GM12878 (cell line): ENCODE measurements at regions of chr1 and their contacts with region 1.

Region 1: DNA sequence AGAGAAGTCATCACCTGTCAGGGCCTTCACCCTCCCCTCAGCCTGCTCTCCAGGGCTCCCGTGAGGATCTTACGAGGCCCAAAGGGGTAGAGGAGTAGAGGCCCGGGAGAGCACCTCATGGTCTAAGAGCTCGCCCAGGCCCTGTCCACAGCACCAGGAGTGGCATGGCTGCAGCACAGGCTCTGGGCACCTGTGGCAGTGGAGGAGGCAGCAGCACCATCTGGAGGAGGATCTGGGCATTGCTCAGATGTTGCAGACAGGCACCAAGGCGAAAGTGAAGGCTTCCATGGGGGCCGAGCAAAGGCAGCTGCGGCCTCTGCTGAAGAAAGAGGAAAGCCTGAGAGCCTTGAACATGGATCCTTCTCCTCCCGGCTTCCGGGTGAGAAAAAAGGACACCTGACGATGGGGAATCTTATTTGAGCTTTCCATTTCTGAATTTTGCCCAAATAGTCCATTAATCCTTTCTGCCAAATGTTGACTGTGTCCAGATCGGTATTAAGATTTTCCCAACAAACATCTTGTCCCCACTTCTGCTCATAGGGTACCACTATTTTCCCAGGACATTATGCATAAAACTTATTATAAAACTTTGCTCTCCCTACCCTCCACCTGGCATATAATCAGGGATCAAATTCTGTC is 604.7 kb downstream of the PTPRC start:
- DNase-seq: peak; percentile 67
- ATAC-seq: peak; percentile 100
- H3K4me3 ChIP-seq: no peak overlapping the region
- H3K27ac ChIP-seq: no peak overlapping the region
- H3K4me1 ChIP-seq: peaks cover 11% of the 10 kb centered on the region
- H3K27me3 ChIP-seq: no peaks in the 10 kb centered on the region
- CTCF ChIP-seq: peak; percentile 91 to 94 (median 93)
- EP300 ChIP-seq: no peak
- POLR2A ChIP-seq: no peak
- RAD21 ChIP-seq: peak; percentile 96

Region 2: GRCh38 chr1:198771563-198772153 is 471.9 kb before region 1 on chr1:
- CTCF ChIA-PET with region 1: interaction called, 27 read pairs
- POLR2A ChIA-PET with region 1: no interaction called
- RAD21 ChIA-PET with region 1: interaction called, 25 read pairs
- SMC1A ChIA-PET with region 1: interaction called, 22 read pairs
- in situ Hi-C with region 1: loop called (anchors 10 kb)
- intact Hi-C with region 1: loop called (anchors 1 kb)
- DNase-seq: peak; percentile 20
- ATAC-seq: peak; percentile 70
- H3K4me3 ChIP-seq: no peak overlapping the region
- H3K27ac ChIP-seq: no peak overlapping the region
- H3K4me1 ChIP-seq: no peaks in the 10 kb centered on the region
- H3K27me3 ChIP-seq: no peaks in the 10 kb centered on the region
- CTCF ChIP-seq: peak; percentile 35 to 61 (median 41); a peak in 5 of 6 replicates
- EP300 ChIP-seq: no peak
- POLR2A ChIP-seq: no peak
- RAD21 ChIP-seq: peak; percentile 98

Region 3: DNA sequence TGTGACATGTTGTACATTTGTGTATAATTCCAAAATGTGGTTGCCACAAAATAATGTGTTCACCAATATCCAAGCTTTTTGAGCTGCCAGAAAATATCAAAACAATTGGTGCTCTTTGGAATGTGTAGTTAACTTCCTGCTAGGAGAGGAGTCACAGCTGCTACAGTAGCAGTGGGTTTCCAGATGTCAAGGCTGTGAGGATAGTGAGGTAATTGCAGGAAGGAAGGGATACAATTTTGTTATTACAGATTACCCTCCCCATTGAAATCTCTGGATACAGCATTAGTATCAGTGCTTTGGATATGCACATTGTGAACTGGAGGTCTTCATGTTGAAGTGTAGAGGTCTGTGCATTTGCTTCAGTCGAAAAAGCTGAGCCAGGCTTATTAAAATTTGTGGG is 351.5 kb before region 1 on chr1:
- CTCF ChIA-PET with region 1: interaction called, 40 read pairs
- POLR2A ChIA-PET with region 1: no interaction called
- RAD21 ChIA-PET with region 1: interaction called, 23 read pairs
- SMC1A ChIA-PET with region 1: interaction called, 10 read pairs
- in situ Hi-C with region 1: no loop called
- intact Hi-C with region 1: loop called (anchors 10 kb)
- DNase-seq: no peak
- ATAC-seq: no peak
- H3K4me3 ChIP-seq: no peak overlapping the region
- H3K27ac ChIP-seq: no peak overlapping the region
- H3K4me1 ChIP-seq: no peaks in the 10 kb centered on the region
- H3K27me3 ChIP-seq: no peaks in the 10 kb centered on the region
- CTCF ChIP-seq: no peak
- EP300 ChIP-seq: no peak
- POLR2A ChIP-seq: no peak
- RAD21 ChIP-seq: no peak

Region 4: DNA sequence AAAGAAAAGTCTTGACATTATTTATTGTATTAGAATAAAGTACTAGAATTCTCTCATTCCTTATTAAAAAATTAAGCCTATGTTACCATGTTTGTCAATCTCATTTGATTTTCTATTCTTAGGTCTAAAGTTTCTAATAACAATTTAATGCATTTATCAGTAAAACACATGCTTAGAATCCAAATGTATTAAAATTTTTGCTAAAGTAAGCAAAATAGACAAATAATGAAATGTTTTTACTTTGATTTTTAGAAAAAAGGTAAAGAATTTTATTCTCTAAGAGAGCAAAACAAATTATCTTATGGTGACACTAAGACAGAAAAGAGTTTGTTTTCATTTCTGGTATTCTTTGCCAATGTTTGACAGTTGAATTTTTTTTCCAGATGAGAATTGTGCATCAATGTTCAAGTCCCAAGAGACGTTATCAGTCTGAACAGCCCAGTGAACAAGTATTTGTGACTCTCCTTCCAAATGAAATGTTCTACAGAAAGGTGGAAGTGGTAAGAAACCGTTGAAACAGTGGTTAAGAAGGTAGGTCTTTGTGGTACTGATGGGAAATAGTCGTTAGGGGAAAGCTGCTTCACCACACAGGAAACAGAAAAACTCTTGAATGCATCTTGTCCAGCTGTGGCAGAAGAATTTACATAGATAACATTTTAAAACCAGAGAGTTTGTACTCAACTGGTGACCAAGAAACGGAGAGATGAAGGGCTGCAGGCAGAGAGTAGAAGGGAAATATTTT is 202.2 kb before region 1 on chr1:
- CTCF ChIA-PET with region 1: interaction called, 4 read pairs
- POLR2A ChIA-PET with region 1: no interaction called
- RAD21 ChIA-PET with region 1: interaction called, 4 read pairs
- SMC1A ChIA-PET with region 1: interaction called, 10 read pairs
- in situ Hi-C with region 1: no loop called
- intact Hi-C with region 1: loop called (anchors 2 kb)
- DNase-seq: peak; percentile 94
- ATAC-seq: peak; percentile 96
- H3K4me3 ChIP-seq: no peak overlapping the region
- H3K27ac ChIP-seq: no peak overlapping the region
- H3K4me1 ChIP-seq: peaks cover 5% of the 10 kb centered on the region; the same call in 1 of the 2 replicates
- H3K27me3 ChIP-seq: no peaks in the 10 kb centered on the region
- CTCF ChIP-seq: no peak
- EP300 ChIP-seq: peak; percentile 85 to 93
- POLR2A ChIP-seq: no peak
- RAD21 ChIP-seq: no peak

Region 5: GRCh38 chr1:199132006-199132405 is 111.5 kb before region 1 on chr1:
- CTCF ChIA-PET with region 1: interaction called, 3 read pairs
- POLR2A ChIA-PET with region 1: no interaction called
- RAD21 ChIA-PET with region 1: interaction called, 3 read pairs
- SMC1A ChIA-PET with region 1: interaction called, 4 read pairs
- in situ Hi-C with region 1: no loop called
- intact Hi-C with region 1: loop called (anchors 5 kb)
- DNase-seq: no peak
- ATAC-seq: no peak
- H3K4me3 ChIP-seq: no peak overlapping the region
- H3K27ac ChIP-seq: no peak overlapping the region
- H3K4me1 ChIP-seq: no peaks in the 10 kb centered on the region
- H3K27me3 ChIP-seq: no peaks in the 10 kb centered on the region
- CTCF ChIP-seq: no peak
- EP300 ChIP-seq: no peak
- POLR2A ChIP-seq: no peak
- RAD21 ChIP-seq: no peak

Region 6: GRCh38 chr1:199226163-199226562 is 17.4 kb before region 1 on chr1:
- CTCF ChIA-PET with region 1: interaction called, 17 read pairs
- POLR2A ChIA-PET with region 1: no interaction called
- RAD21 ChIA-PET with region 1: interaction called, 11 read pairs
- SMC1A ChIA-PET with region 1: interaction called, 13 read pairs
- in situ Hi-C with region 1: no loop called
- intact Hi-C with region 1: no loop called
- DNase-seq: peak; percentile 16
- ATAC-seq: peak; percentile 94
- H3K4me3 ChIP-seq: no peak overlapping the region
- H3K27ac ChIP-seq: peak overlapping the region; percentile 52; the same call in 1 of the 2 replicates
- H3K4me1 ChIP-seq: peaks cover 3% of the 10 kb centered on the region; the same call in 1 of the 2 replicates
- H3K27me3 ChIP-seq: no peaks in the 10 kb centered on the region
- CTCF ChIP-seq: no peak
- EP300 ChIP-seq: peak in 1 of 2 experiments; percentile 15; a peak in 1 of 4 replicates
- POLR2A ChIP-seq: no peak
- RAD21 ChIP-seq: no peak

Region 7: GRCh38 chr1:199399996-199400724 is 156.6 kb after region 1 on chr1:
- CTCF ChIA-PET with region 1: no interaction called
- POLR2A ChIA-PET with region 1: no interaction called
- RAD21 ChIA-PET with region 1: no interaction called
- SMC1A ChIA-PET with region 1: no interaction called
- in situ Hi-C with region 1: no loop called
- intact Hi-C with region 1: no loop called
- DNase-seq: peak; percentile 56
- ATAC-seq: peak; percentile 88
- H3K4me3 ChIP-seq: no peak overlapping the region
- H3K27ac ChIP-seq: peak overlapping the region; percentile 46
- H3K4me1 ChIP-seq: no peaks in the 10 kb centered on the region; the same call in 1 of the 2 replicates
- H3K27me3 ChIP-seq: no peaks in the 10 kb centered on the region
- CTCF ChIP-seq: no peak
- EP300 ChIP-seq: no peak; a peak in 1 of 4 replicates
- POLR2A ChIP-seq: no peak
- RAD21 ChIP-seq: 0 out of 2 replicates have a peak, but pooled peaks have one; percentile 6